B cell (primary cell): ENCODE measurements at regions of chr3 and their contacts with region 1.

Region 1: DNA sequence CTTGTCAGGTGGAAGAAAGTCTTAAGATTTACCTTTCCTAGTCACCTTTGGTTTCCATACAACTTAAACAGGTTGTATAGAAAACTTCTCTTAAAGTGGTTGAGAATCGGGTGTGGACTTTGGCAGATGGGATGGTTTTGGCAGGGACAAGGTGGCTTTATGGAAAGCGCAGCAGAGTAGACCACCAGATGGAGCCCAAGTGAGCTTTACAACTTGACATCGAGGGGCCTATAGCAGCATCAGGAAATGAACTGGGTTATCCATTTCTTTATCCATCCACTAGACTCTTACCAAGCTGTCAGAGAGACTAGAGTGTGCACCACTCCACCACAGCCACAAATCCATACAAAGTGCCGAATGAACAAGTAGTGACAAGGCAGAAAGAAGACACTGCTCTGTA is 85.3 kb upstream of the MBNL1 start:
- DNase-seq: peak; percentile 76
- ATAC-seq: peak; percentile 80
- H3K4me3 ChIP-seq: peak overlapping the region in 1 of 5 experiments; percentile 11
- H3K4me3 Mint-ChIP-seq: no peak overlapping the region
- H3K27ac ChIP-seq: no peak overlapping the region
- H3K27ac Mint-ChIP-seq: peak overlapping the region; percentile 62
- H3K4me1 ChIP-seq: peaks cover 5 to 9% of the 10 kb centered on the region in 2 donors
- H3K4me1 Mint-ChIP-seq: peaks cover 24% of the 10 kb centered on the region
- H3K27me3 ChIP-seq: no peaks in the 10 kb centered on the region
- H3K27me3 Mint-ChIP-seq: no peaks in the 10 kb centered on the region
- CTCF ChIP-seq: peak; percentile 81

Region 2: DNA sequence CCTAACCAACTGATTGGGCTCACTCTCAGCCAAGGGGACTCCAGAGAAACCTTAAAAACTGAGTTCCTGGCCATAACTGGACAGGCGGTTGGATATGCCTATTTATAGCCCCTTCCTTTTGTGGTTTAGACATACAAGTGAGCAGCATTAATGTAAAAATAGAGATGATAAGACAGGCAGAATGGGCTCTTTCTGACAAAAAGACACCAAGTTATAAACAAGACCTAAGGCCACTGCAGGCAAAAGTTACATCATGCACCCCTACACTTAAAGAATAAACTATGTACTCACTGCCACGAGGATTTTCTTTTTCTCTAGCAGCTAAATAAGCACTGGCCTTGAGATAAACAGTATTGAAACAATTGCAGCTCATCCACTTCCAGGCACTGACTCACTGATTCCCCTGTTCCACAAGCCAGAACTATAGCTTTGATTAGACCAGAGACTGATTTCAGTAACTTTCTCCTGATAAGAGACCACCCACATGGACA is 279.9 kb before region 1 on chr3:
- CTCF ChIA-PET with region 1: no interaction called
- POLR2A ChIA-PET with region 1: no interaction called
- intact Hi-C with region 1: no loop called
- DNase-seq: no peak
- ATAC-seq: no peak
- H3K4me3 ChIP-seq: no peak overlapping the region
- H3K4me3 Mint-ChIP-seq: no peak overlapping the region
- H3K27ac ChIP-seq: no peak overlapping the region
- H3K27ac Mint-ChIP-seq: no peak overlapping the region
- H3K4me1 ChIP-seq: no peaks in the 10 kb centered on the region
- H3K4me1 Mint-ChIP-seq: peaks cover 5% of the 10 kb centered on the region
- H3K27me3 ChIP-seq: no peaks in the 10 kb centered on the region
- H3K27me3 Mint-ChIP-seq: peaks cover 4% of the 10 kb centered on the region
- CTCF ChIP-seq: no peak

Region 3: DNA sequence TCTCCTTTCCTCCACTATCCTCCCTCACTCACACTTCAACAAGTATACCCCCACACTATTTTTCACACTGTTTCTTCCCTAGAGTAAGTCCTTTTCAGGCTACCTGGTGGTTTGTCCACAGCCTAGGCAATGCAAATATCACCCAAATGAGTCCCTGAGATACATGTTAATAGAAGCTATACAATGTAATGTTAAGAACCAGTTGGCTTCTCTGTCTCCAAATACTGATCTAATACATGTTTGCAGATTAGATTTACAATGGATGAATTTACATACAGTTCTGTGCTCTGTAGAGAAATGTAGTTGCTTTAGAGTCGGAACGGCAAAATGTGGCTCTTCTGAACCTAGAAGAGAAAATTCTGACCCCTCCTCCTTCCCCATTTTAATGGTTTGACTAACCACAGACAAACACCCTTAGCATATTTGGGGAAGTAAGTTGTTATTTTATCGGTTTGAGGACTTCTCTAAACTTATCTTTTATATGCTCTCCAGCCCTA is 21.7 kb after region 1 on chr3:
- CTCF ChIA-PET with region 1: interaction called, 45 read pairs
- POLR2A ChIA-PET with region 1: no interaction called
- intact Hi-C with region 1: no loop called
- DNase-seq: peak; percentile 87
- ATAC-seq: peak; percentile 82
- H3K4me3 ChIP-seq: peak overlapping the region; percentile 66 to 97 (median 72)
- H3K4me3 Mint-ChIP-seq: peak overlapping the region; percentile 95
- H3K27ac ChIP-seq: peak overlapping the region; percentile 83 to 92
- H3K27ac Mint-ChIP-seq: peak overlapping the region; percentile 96
- H3K4me1 ChIP-seq: peaks cover 21 to 40% of the 10 kb centered on the region in 2 donors
- H3K4me1 Mint-ChIP-seq: peaks cover 46% of the 10 kb centered on the region
- H3K27me3 ChIP-seq: no peaks in the 10 kb centered on the region
- H3K27me3 Mint-ChIP-seq: no peaks in the 10 kb centered on the region
- CTCF ChIP-seq: no peak

Region 4: GRCh38 chr3:152258448-152259393 is 75.2 kb after region 1 on chr3:
- CTCF ChIA-PET with region 1: interaction called, 11 read pairs
- POLR2A ChIA-PET with region 1: no interaction called
- intact Hi-C with region 1: no loop called
- DNase-seq: no peak
- ATAC-seq: peak; percentile 10
- H3K4me3 ChIP-seq: peak overlapping the region in 1 of 5 experiments; percentile 23
- H3K4me3 Mint-ChIP-seq: peak overlapping the region; percentile 72
- H3K27ac ChIP-seq: peak overlapping the region; percentile 22 to 59
- H3K27ac Mint-ChIP-seq: peak overlapping the region; percentile 89
- H3K4me1 ChIP-seq: peaks cover 62 to 65% of the 10 kb centered on the region in 2 donors
- H3K4me1 Mint-ChIP-seq: peaks cover 71% of the 10 kb centered on the region
- H3K27me3 ChIP-seq: no peaks in the 10 kb centered on the region
- H3K27me3 Mint-ChIP-seq: no peaks in the 10 kb centered on the region
- CTCF ChIP-seq: no peak

Region 5: GRCh38 chr3:152291649-152292066 is 108.2 kb after region 1 on chr3:
- CTCF ChIA-PET with region 1: interaction called, 10 read pairs
- POLR2A ChIA-PET with region 1: no interaction called
- intact Hi-C with region 1: no loop called
- DNase-seq: no peak
- ATAC-seq: peak; percentile 21
- H3K4me3 ChIP-seq: peak overlapping the region in 1 of 5 experiments; percentile 1
- H3K4me3 Mint-ChIP-seq: peak overlapping the region; percentile 14
- H3K27ac ChIP-seq: peak overlapping the region in 1 of 2 donors; percentile 74
- H3K27ac Mint-ChIP-seq: peak overlapping the region; percentile 66
- H3K4me1 ChIP-seq: peaks cover 56 to 79% of the 10 kb centered on the region in 2 donors
- H3K4me1 Mint-ChIP-seq: peaks cover 75% of the 10 kb centered on the region
- H3K27me3 ChIP-seq: no peaks in the 10 kb centered on the region
- H3K27me3 Mint-ChIP-seq: no peaks in the 10 kb centered on the region
- CTCF ChIP-seq: no peak

Region 6: DNA sequence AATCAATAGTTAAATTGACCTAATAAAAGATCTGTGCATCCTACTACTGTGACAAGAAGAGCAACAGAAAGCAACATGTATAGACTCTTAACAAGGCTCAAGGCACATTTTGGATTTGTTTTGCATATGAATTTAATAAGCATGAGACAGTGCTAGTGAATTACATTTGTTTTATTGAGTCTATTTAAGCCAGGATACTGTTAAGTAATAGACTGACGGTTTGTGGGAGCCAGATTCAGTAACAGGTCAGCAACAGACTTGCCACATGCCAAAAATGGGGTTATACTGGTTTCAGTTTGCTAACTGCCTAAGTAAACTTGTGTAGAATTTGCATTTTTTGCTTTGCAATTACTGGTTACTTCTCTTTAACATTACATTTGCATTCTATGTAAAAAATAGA is 139.3 kb after region 1 on chr3:
- CTCF ChIA-PET with region 1: interaction called, 17 read pairs
- POLR2A ChIA-PET with region 1: no interaction called
- intact Hi-C with region 1: no loop called
- DNase-seq: peak; percentile 39
- ATAC-seq: no peak
- H3K4me3 ChIP-seq: no peak overlapping the region
- H3K4me3 Mint-ChIP-seq: peak overlapping the region; percentile 55
- H3K27ac ChIP-seq: peak overlapping the region in 1 of 2 donors; percentile 66
- H3K27ac Mint-ChIP-seq: peak overlapping the region; percentile 18
- H3K4me1 ChIP-seq: peaks cover 24 to 53% of the 10 kb centered on the region in 2 donors
- H3K4me1 Mint-ChIP-seq: peaks cover 64% of the 10 kb centered on the region
- H3K27me3 ChIP-seq: no peaks in the 10 kb centered on the region
- H3K27me3 Mint-ChIP-seq: no peaks in the 10 kb centered on the region
- CTCF ChIP-seq: no peak

Region 7: DNA sequence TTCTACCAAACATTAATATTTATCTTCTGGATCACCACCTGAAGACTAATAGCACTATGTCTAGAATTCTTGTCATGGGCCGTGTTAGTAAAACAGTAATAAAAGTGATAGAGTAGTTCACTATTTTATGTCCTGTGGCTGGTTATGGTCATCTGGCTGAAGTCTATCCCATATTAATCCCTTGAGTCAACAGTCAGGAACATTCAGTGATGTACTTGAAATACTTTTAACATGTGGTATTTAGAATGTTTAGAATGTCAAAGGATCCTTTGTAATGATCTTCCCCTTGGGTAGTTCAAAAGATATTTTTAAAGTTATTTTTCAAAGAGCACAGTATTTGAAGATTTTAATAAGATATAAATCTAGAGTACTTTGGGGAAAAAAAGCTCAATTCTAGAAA is 202.3 kb after region 1 on chr3:
- CTCF ChIA-PET with region 1: interaction called, 10 read pairs
- POLR2A ChIA-PET with region 1: no interaction called
- intact Hi-C with region 1: no loop called
- DNase-seq: no peak
- ATAC-seq: no peak
- H3K4me3 ChIP-seq: no peak overlapping the region
- H3K4me3 Mint-ChIP-seq: no peak overlapping the region
- H3K27ac ChIP-seq: peak overlapping the region in 1 of 2 donors; percentile 53
- H3K27ac Mint-ChIP-seq: no peak overlapping the region
- H3K4me1 ChIP-seq: peaks cover 18 to 37% of the 10 kb centered on the region in 2 donors
- H3K4me1 Mint-ChIP-seq: peaks cover 67% of the 10 kb centered on the region
- H3K27me3 ChIP-seq: no peaks in the 10 kb centered on the region
- H3K27me3 Mint-ChIP-seq: no peaks in the 10 kb centered on the region
- CTCF ChIP-seq: no peak